WTC11 (cell line): ENCODE measurements at regions of chr2 and their contacts with region 1.

Region 1: DNA sequence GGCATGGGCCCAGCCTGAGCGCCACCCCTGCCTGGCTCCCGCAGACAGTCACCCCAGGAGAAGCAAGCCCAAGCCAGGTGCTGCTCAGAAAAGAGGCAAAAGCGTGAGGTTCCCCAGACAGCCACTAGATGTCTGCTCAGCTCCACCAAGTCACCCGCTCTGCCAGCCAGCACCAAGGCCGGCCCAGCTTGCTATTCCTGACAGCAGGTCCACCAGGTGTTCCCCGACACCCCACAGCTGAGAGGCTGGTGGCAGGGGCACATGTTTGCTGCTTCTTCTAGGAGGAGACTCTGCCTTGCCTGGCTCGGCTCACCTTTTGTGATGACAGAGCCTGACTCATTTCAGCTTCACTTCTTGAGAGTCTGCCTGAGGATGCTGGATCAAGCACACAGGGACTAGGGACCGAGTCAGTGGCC is 206.7 kb downstream of the MGAT5 start:
- DNase-seq: peak; percentile 82
- ATAC-seq: peak; percentile 97
- H3K4me3 Mint-ChIP-seq: no peak overlapping the region
- H3K27ac Mint-ChIP-seq: no peak overlapping the region
- H3K4me1 Mint-ChIP-seq: peaks cover 5% of the 10 kb centered on the region; the same call in 1 of the 2 replicates
- H3K27me3 Mint-ChIP-seq: no peaks in the 10 kb centered on the region
- CTCF ChIP-seq: peak; percentile 56; the same call in 1 of the 2 replicates

Region 2: DNA sequence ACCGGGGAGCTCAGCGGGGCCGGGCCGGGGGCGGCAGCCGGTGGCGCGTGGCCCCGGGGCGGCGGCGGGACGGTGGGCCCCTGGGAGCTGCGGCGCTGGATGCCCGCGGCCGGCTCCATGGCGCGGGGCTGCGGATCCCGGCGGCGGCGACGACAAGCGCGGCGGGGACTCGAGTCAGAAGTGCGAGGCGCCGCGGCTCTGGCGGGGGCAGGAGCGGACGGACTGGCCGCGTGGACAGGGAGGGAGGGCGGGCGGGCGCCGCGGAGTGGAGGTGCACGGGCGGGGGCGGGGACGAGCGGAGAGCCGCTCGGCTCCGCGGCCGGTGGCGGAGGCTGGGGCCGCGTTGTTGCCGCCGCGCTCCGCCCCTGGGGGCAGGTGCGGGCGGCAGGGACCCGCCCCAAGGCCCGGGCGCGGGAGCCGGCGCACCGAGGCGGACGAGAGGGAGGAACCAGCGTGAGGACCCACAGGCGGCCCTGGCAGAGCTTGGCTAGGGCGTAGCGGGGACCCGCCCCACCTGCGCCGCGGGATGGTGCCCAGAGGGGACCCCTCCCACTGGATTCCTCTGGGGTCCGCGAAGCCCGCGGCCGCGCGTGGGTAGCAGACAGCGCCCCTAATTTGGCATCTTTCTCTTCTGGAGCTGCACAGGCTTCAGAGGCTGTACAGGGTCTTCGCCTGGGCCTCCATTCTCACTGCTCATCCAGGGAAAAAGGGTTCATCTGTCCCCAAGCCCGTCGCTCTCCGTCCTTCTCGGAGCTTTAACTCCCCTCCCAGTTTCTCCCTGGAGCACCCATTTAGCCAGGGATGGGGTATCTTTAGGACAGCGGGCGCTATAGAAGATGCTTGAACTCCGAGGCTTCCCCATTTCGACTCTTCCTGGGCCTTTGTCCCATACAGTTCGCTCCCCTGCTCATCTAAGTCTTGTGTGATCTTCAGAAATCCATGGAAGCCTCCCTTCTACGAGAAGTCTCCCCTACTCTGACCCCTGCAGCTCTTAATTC is 258.5 kb after region 1 on chr2 and contains the start of gene TMEM163:
- CTCF ChIA-PET with region 1: interaction called, 11 read pairs
- POLR2A ChIA-PET with region 1: no interaction called
- DNase-seq: peak; percentile 54
- ATAC-seq: peak; percentile 70
- H3K4me3 Mint-ChIP-seq: peak within 1 kb of the TSS; percentile 76
- H3K27ac Mint-ChIP-seq: no peak within 1 kb of the TSS
- H3K4me1 Mint-ChIP-seq: peaks cover 25% of the 10 kb centered on the region
- H3K27me3 Mint-ChIP-seq: peaks cover 78% of the 10 kb centered on the region
- CTCF ChIP-seq: no peak
- total RNA-seq, gene TMEM163: 0.94 to 1.6 TPM (median 1.2 TPM) in 3 replicates